MCF 10A (cell line): ENCODE measurements at regions of chr22 and their contacts with region 1.

Region 1: DNA sequence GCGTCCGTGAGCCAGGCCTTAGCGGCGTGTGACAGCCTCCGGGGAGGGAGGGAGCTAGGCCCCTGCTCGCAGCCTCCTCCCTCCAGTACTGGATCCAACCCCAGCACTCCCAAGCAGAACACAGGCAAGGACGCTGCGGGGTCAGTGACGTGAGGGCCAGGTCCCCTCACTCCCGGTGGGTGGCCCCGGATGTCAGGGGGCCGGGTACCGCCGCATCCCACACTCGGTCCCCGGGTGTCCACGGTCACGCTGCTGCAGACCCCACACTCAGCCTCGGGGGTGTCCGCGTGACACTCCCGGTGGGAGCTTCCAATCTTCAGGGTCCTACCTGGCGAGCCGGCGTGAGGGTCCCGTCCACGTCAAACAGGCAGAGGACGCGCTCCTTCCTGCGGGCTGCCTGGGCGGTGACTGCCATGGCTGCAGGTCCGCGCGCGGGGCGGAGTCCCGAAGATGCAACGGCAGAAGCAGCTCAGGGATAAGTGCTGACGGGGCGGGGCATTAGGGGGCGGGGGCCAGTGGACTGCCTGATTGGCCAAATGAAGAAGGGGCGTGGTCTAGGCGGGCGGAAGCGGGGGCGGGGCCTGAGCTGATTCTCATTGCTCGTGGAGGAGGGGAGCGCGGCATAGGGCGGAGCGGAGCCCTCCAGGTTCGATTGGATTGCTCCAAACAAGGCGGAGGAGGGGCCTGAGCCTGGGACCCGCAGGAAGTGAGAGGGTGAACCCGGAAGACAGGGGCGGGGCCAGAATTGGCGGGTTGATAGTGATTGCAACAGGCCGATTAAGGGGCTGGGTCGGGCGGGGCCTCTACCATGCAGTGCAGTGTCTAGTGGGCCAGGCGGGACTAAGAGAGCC is at the start of gene PMM1:
- DNase-seq: peak; percentile 100
- H3K4me3 Mint-ChIP-seq: peak within 1 kb of the TSS; percentile 88
- H3K27ac Mint-ChIP-seq: peak within 1 kb of the TSS; percentile 86
- H3K4me1 Mint-ChIP-seq: peaks cover 4% of the 10 kb centered on the region
- H3K27me3 Mint-ChIP-seq: no peaks in the 10 kb centered on the region
- CTCF ChIP-seq: no peak
- total RNA-seq, gene PMM1: 29.9 and 30.9 TPM in 2 replicates

Region 2: GRCh38 chr22:41565403-41566054 is 24.1 kb before region 1 on chr22:
- CTCF ChIA-PET with region 1: no interaction called
- POLR2A ChIA-PET with region 1: interaction called, 29 read pairs
- intact Hi-C with region 1: no loop called
- DNase-seq: peak; percentile 82
- H3K4me3 Mint-ChIP-seq: no peak overlapping the region
- H3K27ac Mint-ChIP-seq: no peak overlapping the region
- H3K4me1 Mint-ChIP-seq: peaks cover 8% of the 10 kb centered on the region
- H3K27me3 Mint-ChIP-seq: no peaks in the 10 kb centered on the region
- CTCF ChIP-seq: no peak

Region 3: DNA sequence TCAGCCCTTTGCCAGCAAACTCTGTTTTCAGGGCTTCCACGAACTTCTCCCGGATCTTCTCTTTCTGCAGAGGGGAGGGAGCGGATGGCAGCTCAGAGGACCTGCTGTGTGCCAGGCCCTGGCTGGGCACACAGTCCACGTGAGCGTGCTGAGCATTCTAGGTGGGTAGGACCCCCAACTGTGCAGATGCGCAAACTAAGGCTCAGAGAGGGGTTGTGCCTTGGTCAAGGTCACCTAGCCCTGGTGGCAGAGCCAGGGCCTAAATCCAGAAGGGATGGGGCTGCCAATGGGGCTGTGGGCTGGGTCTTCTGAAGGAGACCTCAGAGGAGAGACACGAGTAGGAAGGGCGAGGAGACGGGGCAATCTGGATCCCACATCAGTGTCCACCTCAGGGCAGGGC is 10.8 kb before region 1 on chr22:
- CTCF ChIA-PET with region 1: interaction called, 4 read pairs
- POLR2A ChIA-PET with region 1: interaction called, 10 read pairs
- intact Hi-C with region 1: no loop called
- DNase-seq: no peak
- H3K4me3 Mint-ChIP-seq: no peak overlapping the region
- H3K27ac Mint-ChIP-seq: no peak overlapping the region
- H3K4me1 Mint-ChIP-seq: no peaks in the 10 kb centered on the region
- H3K27me3 Mint-ChIP-seq: no peaks in the 10 kb centered on the region
- CTCF ChIP-seq: no peak

Region 4: DNA sequence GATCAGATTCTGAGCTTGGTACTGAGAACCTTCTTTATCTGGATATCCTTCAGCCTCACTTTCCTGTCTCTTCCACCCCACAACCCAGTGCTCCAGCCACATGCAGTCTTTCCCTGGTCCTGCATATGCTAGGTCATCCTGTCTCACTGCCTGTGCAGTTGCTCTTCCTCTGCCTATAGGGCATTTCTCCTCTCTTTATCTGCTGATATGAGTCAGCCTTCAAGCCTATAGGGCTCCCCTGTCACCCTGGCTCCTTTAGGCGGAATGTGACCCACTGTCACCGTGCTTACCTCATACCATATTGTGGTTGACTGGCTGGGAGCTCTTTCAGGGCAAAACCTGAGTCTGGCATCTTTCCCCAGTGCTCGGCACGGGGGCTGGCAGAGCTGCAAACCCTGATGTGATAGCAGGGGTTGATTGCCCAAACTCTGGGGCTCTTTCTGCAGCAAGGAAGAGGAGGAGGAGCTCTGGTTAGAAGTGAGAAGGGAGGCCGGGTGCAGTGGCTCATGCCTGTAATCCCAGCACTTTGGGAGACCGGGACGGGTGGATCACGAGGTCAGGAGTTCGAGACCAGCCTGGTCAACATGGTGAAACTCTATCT is 136.0 kb after region 1 on chr22:
- CTCF ChIA-PET with region 1: no interaction called
- POLR2A ChIA-PET with region 1: no interaction called
- intact Hi-C with region 1: no loop called
- DNase-seq: no peak
- H3K4me3 Mint-ChIP-seq: no peak overlapping the region
- H3K27ac Mint-ChIP-seq: no peak overlapping the region
- H3K4me1 Mint-ChIP-seq: no peaks in the 10 kb centered on the region
- H3K27me3 Mint-ChIP-seq: peaks cover 7% of the 10 kb centered on the region
- CTCF ChIP-seq: no peak